ENCODE measurements at regions of chr19 and their contacts with region 1.

Region 1: DNA sequence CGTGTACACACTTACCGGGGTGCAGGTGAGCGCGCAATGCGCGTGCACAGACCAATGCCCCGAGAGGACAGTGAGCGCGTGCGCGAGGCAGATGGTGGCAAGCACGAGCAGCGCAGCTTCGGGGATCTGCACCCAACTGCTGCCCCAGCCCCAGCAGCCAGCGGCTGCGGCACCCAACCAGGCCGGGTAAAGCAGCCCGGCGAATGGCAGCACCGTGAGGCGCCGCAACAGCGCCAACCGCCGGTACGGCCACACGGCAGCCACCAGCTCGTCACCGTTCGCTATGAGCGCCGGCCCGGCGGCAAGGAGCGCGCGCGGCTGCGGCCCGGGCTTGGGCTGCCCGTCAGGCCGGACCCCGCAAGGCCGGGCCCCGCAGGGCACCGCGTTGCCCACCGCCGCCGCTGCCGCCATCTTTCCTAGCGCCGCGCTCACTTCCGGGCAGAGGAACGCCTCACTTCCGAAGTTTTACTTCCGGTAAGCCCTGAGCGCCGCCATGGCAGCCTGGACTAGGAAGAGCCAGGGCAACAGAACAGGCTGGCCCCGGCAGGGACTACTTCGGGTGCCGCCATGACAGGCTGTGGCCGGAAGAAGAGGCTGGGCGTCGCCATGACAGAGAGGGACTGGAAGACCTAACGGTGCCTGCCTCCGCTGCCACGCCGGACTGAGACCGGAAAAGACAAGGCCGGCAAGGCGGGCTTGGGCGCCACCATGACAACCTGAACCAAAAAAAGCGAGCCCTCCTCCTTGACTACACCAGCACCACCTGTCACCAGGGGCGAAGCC is at the start of gene ATP13A1:
- DNase-seq: peak; percentile 98
- H3K4me3 ChIP-seq: peak within 1 kb of the TSS; percentile 48 to 85 (median 67)
- H3K27ac ChIP-seq: peak within 1 kb of the TSS; percentile 54
- H3K4me1 ChIP-seq: peaks cover 17% of the 10 kb centered on the region
- H3K27me3 ChIP-seq: no peaks in the 10 kb centered on the region
- CTCF ChIP-seq: no peak
- total RNA-seq, gene ATP13A1: 53.0 to 56.0 TPM

Region 2: DNA sequence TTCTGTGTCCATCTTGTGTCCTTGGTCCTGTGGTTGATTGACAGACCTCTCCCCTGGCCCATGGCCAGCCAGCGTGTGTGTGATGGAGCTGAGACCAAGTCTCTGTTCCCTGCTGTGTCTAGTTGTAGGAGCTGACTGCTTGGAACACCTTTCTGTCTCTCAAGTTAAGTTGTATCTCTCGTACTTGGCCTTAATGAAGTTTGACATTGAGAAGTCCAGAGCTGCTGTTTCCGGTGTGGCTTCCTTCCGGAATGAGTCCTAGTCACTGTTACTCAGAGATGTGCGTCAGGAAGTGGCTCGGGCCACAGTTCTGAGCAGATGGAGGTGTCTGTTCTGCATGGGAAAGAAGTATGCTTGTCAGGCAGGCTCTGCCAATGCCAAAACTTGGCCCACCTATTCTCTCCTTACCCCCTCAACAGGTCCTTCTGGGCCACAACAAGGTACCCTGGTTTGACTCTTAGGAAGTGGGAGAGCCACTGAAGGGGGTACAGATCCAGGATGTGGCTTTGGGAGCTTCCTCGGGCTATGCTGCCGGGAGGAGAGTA is 203.7 kb before region 1 on chr19:
- CTCF ChIA-PET with region 1: no interaction called
- dilution Hi-C with region 1: loop called (anchors 5 kb)
- in situ Hi-C with region 1: no loop called
- intact Hi-C with region 1: no loop called
- DNase-seq: no peak
- H3K4me3 ChIP-seq: no peak overlapping the region
- H3K27ac ChIP-seq: no peak overlapping the region
- H3K4me1 ChIP-seq: peaks cover 54% of the 10 kb centered on the region
- H3K27me3 ChIP-seq: no peaks in the 10 kb centered on the region
- CTCF ChIP-seq: no peak

Region 3: GRCh38 chr19:19591133-19591825 is 72.2 kb before region 1 on chr19:
- CTCF ChIA-PET with region 1: no interaction called
- dilution Hi-C with region 1: loop called (anchors 5 kb)
- in situ Hi-C with region 1: no loop called
- intact Hi-C with region 1: no loop called
- DNase-seq: peak; percentile 98
- H3K4me3 ChIP-seq: peak overlapping the region in 1 of 3 experiments; percentile 0
- H3K27ac ChIP-seq: peak overlapping the region; percentile 65
- H3K4me1 ChIP-seq: peaks cover 18% of the 10 kb centered on the region
- H3K27me3 ChIP-seq: no peaks in the 10 kb centered on the region
- CTCF ChIP-seq: no peak

Region 4: DNA sequence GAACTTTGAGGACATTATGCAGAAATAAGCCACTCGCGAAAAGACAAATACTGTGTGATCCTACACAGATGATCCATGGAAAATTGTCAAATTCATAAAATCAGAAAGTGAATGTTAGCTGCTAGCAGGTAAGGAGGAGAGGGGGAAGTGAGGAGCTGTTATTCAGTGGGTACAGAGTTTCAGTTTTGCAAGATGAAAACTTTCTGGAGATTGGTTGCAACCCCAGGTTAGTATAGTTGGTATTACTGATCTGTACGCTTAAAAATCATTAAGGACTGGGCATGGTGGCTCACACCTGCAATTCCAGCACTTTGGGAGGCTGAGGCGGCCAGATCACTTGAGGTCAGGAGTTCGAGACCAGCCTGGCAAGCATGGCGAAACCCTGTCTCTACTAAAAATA is 23.1 kb after region 1 on chr19:
- CTCF ChIA-PET with region 1: no interaction called
- dilution Hi-C with region 1: no loop called
- in situ Hi-C with region 1: no loop called
- intact Hi-C with region 1: no loop called
- DNase-seq: no peak
- H3K4me3 ChIP-seq: no peak overlapping the region
- H3K27ac ChIP-seq: no peak overlapping the region
- H3K4me1 ChIP-seq: no peaks in the 10 kb centered on the region
- H3K27me3 ChIP-seq: no peaks in the 10 kb centered on the region
- CTCF ChIP-seq: no peak

Region 5: GRCh38 chr19:19776041-19777008 is 112.9 kb after region 1 on chr19:
- CTCF ChIA-PET with region 1: no interaction called
- dilution Hi-C with region 1: no loop called
- in situ Hi-C with region 1: no loop called
- intact Hi-C with region 1: loop called (anchors 2 kb)
- DNase-seq: peak; percentile 100
- H3K4me3 ChIP-seq: peak overlapping the region; percentile 50 to 80 (median 70)
- H3K27ac ChIP-seq: peak overlapping the region; percentile 63
- H3K4me1 ChIP-seq: peaks cover 8% of the 10 kb centered on the region
- H3K27me3 ChIP-seq: no peaks in the 10 kb centered on the region
- CTCF ChIP-seq: no peak

Region 6: GRCh38 chr19:19900729-19901444 is 237.4 kb after region 1 on chr19 and contains the start of gene ZNF93:
- CTCF ChIA-PET with region 1: no interaction called
- dilution Hi-C with region 1: no loop called
- in situ Hi-C with region 1: no loop called
- intact Hi-C with region 1: loop called (anchors 2 kb)
- DNase-seq: peak; percentile 95
- H3K4me3 ChIP-seq: peak within 1 kb of the TSS; percentile 41 to 50 (median 43)
- H3K27ac ChIP-seq: no peak within 1 kb of the TSS
- H3K4me1 ChIP-seq: no peaks in the 10 kb centered on the region
- H3K27me3 ChIP-seq: no peaks in the 10 kb centered on the region
- CTCF ChIP-seq: no peak
- total RNA-seq, gene ZNF93: 6.4 to 16.8 TPM

Region 7: GRCh38 chr19:20051841-20052768 is 388.7 kb after region 1 on chr19:
- CTCF ChIA-PET with region 1: no interaction called
- dilution Hi-C with region 1: no loop called
- in situ Hi-C with region 1: no loop called
- intact Hi-C with region 1: loop called (anchors 2 kb)
- DNase-seq: peak; percentile 99
- H3K4me3 ChIP-seq: peak overlapping the region in 2 of 3 experiments; percentile 0 to 26
- H3K27ac ChIP-seq: no peak overlapping the region
- H3K4me1 ChIP-seq: no peaks in the 10 kb centered on the region
- H3K27me3 ChIP-seq: no peaks in the 10 kb centered on the region
- CTCF ChIP-seq: no peak

Region 8: DNA sequence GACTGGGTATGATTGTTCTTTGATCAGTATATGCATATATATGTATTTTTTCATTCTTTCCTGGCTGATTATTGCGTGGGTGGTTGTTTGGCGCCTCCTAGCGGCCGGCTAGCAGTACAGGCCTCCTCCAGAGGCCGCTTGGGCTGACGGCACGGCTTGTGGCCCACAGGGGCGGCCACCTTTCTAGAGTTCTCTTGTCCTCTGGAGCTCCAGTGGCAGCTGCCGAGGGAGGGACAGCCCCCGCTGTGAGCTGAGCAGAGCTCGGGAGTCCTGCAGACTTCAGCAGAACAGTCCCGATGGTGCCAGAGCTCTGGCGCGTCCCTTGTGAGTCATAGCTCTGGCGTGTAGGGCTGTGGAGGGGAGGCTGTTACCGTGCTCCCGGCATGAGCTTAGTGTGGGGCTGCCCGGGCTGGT is 1819.4 kb after region 1 on chr19:
- CTCF ChIA-PET with region 1: no interaction called
- dilution Hi-C with region 1: no loop called
- in situ Hi-C with region 1: no loop called
- intact Hi-C with region 1: loop called (anchors 10 kb)
- DNase-seq: no peak
- H3K4me3 ChIP-seq: no peak overlapping the region
- H3K27ac ChIP-seq: no peak overlapping the region
- H3K4me1 ChIP-seq: no peaks in the 10 kb centered on the region
- H3K27me3 ChIP-seq: no peaks in the 10 kb centered on the region
- CTCF ChIP-seq: peak; percentile 14 to 33